WTC11 (cell line): ENCODE measurements at regions of chr5 and their contacts with region 1.

Region 1: DNA sequence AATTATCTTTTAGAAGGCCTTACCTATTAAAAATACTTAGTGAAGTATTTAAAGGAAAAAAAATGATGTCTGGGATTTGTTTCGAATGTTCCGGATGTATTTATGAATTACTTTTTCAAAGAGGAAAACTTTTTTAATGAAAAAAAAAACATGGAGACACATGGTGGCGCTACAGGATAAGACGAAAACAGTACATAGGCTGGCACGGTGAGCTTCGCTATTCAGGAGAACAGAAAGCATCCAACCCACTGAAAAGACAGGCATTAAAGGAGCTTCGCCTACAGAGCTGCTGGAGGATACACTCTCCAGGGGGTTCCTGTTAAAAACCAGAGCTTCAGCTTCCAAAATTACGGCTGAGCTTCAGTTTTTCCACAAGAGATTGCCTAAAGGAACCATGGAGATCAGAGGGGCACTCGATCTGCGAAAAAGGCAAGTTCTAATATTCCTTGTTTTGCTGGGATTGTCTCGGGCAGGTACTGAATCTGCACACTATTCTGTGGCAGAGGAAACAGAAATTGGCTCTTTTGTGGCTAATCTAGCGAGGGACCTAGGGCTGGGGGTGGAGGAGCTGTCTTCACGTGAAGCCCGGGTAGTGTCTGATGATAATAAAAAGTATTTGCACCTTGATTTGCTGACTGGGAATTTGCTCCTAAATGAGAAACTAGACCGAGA is at the start of gene PCDHB14:
- DNase-seq: no peak
- ATAC-seq: peak; percentile 100
- H3K4me3 Mint-ChIP-seq: peak within 1 kb of the TSS; percentile 62
- H3K27ac Mint-ChIP-seq: peak within 1 kb of the TSS; percentile 19; the same call in 1 of the 2 replicates
- H3K4me1 Mint-ChIP-seq: peaks cover 11% of the 10 kb centered on the region
- H3K27me3 Mint-ChIP-seq: no peaks in the 10 kb centered on the region; the same call in none of the 2 replicates
- CTCF ChIP-seq: no peak
- total RNA-seq, gene PCDHB14: 2.6 to 3.5 TPM (median 2.8 TPM) in 3 replicates

Region 2: DNA sequence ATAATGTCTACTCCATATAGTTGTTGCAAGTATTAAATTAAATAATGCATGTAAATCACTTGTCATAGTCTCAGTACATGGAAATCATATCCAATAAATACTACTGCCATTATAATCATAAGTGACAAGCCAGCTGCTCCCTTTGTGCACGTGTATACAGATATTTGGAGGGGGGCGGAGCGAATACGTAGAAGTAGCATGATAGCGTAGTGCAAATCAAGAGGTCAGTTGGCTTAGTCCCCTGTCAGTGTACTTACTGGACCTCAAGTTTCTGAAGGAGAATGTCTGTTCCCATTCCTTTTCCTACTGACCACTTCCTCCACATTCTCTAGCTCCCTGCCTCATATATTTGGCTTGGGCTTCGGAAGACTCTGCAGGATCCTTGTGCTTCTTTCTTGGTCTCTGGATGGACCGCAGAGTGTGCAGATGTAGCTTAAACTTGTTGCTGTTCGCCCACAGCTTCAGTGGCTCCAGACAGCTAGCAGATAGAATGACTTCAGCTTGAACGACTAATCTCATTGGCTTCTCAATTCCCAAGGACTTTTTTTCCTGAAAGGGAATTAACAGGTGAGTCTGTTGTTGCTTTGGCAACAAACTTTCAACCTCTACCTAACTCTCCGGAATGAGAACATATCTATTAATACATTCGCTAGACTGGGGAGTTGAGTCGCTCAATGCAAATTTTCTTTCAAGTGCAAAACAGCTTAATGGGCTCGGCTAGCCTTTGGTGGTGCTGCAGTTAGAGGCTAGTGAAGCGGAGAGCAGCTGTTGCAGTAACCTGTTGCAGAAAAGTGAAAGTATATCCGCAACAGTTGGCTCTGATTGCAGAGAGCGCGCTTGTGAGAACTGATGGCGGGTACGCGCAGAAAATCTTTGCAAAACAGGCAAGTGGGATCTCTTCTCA is 172.4 kb before region 1 on chr5 and contains the start of gene PCDHB1:
- CTCF ChIA-PET with region 1: no interaction called
- POLR2A ChIA-PET with region 1: no interaction called
- DNase-seq: peak; percentile 26
- ATAC-seq: peak; percentile 80
- H3K4me3 Mint-ChIP-seq: peak within 1 kb of the TSS; percentile 82
- H3K27ac Mint-ChIP-seq: peak within 1 kb of the TSS; percentile 73
- H3K4me1 Mint-ChIP-seq: peaks cover 13% of the 10 kb centered on the region
- H3K27me3 Mint-ChIP-seq: peaks cover 45% of the 10 kb centered on the region
- CTCF ChIP-seq: no peak
- total RNA-seq, gene PCDHB1: 0.09 to 0.13 TPM (median 0.11 TPM) in 3 replicates

Region 3: GRCh38 chr5:141155540-141156374 is 67.5 kb before region 1 on chr5:
- CTCF ChIA-PET with region 1: interaction called, 12 read pairs
- POLR2A ChIA-PET with region 1: no interaction called
- DNase-seq: peak; percentile 61
- ATAC-seq: peak; percentile 84
- H3K4me3 Mint-ChIP-seq: peak overlapping the region; percentile 49
- H3K27ac Mint-ChIP-seq: no peak overlapping the region
- H3K4me1 Mint-ChIP-seq: 0 out of 2 replicates have a peak, but pooled peaks cover 5% of the 10 kb centered on the region
- H3K27me3 Mint-ChIP-seq: no peaks in the 10 kb centered on the region
- CTCF ChIP-seq: peak; percentile 55

Region 4: GRCh38 chr5:141208478-141208877 is 14.8 kb before region 1 on chr5 and contains the start of gene PCDHB12:
- CTCF ChIA-PET with region 1: interaction called, 20 read pairs
- POLR2A ChIA-PET with region 1: no interaction called
- DNase-seq: peak; percentile 54
- ATAC-seq: peak; percentile 73
- H3K4me3 Mint-ChIP-seq: peak within 1 kb of the TSS; percentile 72
- H3K27ac Mint-ChIP-seq: no peak within 1 kb of the TSS
- H3K4me1 Mint-ChIP-seq: peaks cover 4% of the 10 kb centered on the region
- H3K27me3 Mint-ChIP-seq: peaks cover 3% of the 10 kb centered on the region
- CTCF ChIP-seq: 0 out of 2 replicates have a peak, but pooled peaks have one; percentile 27
- total RNA-seq, gene PCDHB12: 2.7 to 3.1 TPM (median 3.1 TPM) in 3 replicates

Region 5: DNA sequence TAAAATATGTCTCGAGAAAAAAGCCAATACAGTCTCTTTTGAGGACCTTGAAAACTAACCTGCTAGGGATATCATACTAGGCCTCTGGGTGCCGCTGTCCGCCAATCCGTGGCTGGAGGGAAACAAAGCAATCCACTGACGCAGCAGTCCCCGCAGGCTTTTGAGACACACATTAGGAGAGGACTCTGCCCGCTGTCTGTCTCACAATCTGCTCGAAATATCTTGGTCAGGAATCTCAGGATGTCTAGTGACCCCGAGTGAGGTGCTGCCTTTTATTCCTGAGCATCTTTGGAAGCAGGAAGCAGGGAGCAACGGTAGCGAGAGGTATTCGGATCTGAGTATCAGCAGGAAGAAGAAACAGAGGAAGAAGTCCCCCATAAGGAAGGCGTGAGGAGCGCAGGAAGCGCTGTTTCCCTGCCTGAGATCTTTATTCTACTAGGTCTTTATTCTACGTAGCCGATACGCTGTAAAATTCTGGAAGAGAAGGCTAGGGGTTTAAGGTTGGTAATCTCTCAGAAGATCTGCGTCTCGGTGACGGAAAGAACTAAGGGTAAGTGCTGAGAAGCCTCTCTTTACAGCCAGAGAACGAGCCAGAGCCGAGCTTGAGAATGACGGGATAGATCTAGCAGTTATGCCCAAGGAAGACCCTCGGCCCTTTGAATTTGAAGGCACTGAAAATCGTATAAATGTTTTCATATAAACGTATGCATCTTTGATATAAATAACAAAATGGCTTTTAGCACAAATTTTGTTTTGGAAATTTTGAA is 103.0 kb after region 1 on chr5:
- CTCF ChIA-PET with region 1: interaction called, 16 read pairs
- POLR2A ChIA-PET with region 1: no interaction called
- DNase-seq: peak; percentile 76
- ATAC-seq: peak; percentile 91
- H3K4me3 Mint-ChIP-seq: peak overlapping the region; percentile 90
- H3K27ac Mint-ChIP-seq: peak overlapping the region; percentile 98
- H3K4me1 Mint-ChIP-seq: peaks cover 7% of the 10 kb centered on the region
- H3K27me3 Mint-ChIP-seq: peaks cover 12% of the 10 kb centered on the region
- CTCF ChIP-seq: peak; percentile 43; the same call in 1 of the 2 replicates

Region 6: DNA sequence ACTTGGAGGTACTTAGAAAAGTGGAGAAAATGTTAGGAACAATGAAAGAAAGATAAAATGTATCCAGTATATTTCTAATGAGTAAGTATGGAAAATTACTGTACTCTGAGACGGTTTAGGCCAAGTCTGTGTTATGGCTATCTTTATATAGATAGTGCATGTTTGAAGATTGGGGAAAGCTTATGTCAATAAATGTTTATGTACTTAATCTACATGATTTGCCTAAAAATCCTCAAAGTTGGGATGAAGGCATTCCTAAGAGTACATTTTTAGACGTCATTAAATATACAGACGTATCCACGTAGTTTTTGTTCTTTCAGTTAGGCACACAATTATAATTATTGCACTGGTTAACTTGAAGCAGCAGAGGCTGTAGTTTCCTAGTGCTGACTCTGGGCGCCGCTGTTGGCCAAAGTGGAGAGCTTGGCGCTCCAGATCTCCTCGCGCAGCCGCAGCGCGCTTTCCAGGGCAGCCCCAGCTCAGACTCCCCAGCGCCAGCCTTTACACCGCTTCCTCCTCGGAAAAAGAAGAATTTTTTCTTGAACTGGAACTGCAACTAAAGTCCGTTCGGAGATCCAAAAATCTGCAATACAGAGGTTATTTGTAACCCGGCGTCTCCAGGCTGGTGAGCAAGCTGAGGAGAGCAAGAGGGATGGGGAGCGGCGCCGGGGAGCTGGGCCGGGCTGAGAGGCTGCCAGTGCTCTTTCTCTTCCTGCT is 164.1 kb after region 1 on chr5 and contains the start of gene PCDHGB4:
- CTCF ChIA-PET with region 1: interaction called, 24 read pairs
- POLR2A ChIA-PET with region 1: no interaction called
- DNase-seq: peak; percentile 80
- ATAC-seq: peak; percentile 96
- H3K4me3 Mint-ChIP-seq: peak within 1 kb of the TSS; percentile 81
- H3K27ac Mint-ChIP-seq: no peak within 1 kb of the TSS
- H3K4me1 Mint-ChIP-seq: 0 out of 2 replicates have a peak, but pooled peaks cover 3% of the 10 kb centered on the region
- H3K27me3 Mint-ChIP-seq: peaks cover 37% of the 10 kb centered on the region
- CTCF ChIP-seq: peak; percentile 48; the same call in 1 of the 2 replicates
- total RNA-seq, gene PCDHGB4: 7.8 to 9.1 TPM (median 8.8 TPM) in 3 replicates

Region 7: DNA sequence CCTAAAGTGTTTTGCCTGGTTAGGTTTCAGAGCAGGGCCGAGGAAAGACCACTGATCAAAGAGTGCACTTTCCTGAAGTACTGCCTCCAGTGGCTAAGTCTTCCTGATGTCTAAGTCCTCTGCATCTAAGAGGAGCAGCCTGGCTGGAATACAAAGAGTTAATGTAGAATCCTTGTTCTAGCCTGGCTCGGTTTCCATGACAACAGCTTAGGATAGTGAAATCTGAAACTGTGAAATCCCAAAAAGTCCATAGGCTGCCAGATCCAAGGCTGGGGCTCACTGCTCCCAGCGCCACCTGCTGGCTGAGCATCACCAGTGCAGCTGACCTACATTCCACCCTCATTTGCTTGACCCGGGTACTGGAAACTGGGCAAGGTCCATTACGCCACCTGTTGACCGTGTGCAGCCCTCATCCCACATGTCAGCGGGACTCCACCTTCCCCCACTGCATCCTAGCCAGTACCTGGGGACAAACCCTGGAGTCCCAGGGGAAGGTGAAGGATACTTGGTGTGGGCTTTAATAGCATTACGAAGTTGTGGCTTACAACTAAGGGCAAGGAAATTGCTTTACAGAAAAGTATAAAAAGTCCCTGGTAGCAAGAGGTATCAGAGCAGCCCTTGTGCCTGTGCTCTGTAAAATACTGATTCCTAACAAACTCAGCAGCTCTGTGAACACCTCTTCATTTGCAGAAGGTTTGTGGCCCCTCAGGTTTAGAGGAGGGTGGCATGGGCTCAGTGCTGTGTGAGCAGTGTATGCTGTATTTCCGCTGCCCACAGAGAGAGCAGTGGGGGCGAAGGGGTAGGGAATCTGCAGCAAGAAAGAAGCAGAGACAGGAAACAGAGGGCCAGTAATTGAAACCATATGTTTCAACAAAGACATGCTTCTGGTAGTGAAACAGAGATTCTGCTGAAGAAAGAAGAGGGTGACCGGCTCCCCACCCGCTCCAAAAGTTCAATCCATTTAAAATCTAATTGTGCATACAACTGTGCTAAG is 301.7 kb after region 1 on chr5:
- CTCF ChIA-PET with region 1: interaction called, 21 read pairs
- POLR2A ChIA-PET with region 1: no interaction called
- DNase-seq: peak; percentile 93
- ATAC-seq: peak; percentile 98
- H3K4me3 Mint-ChIP-seq: no peak overlapping the region
- H3K27ac Mint-ChIP-seq: peak overlapping the region; percentile 87
- H3K4me1 Mint-ChIP-seq: peaks cover 23% of the 10 kb centered on the region
- H3K27me3 Mint-ChIP-seq: no peaks in the 10 kb centered on the region
- CTCF ChIP-seq: peak; percentile 97